ENCODE measurements at regions of chr22 and their contacts with region 1.

Region 1: DNA sequence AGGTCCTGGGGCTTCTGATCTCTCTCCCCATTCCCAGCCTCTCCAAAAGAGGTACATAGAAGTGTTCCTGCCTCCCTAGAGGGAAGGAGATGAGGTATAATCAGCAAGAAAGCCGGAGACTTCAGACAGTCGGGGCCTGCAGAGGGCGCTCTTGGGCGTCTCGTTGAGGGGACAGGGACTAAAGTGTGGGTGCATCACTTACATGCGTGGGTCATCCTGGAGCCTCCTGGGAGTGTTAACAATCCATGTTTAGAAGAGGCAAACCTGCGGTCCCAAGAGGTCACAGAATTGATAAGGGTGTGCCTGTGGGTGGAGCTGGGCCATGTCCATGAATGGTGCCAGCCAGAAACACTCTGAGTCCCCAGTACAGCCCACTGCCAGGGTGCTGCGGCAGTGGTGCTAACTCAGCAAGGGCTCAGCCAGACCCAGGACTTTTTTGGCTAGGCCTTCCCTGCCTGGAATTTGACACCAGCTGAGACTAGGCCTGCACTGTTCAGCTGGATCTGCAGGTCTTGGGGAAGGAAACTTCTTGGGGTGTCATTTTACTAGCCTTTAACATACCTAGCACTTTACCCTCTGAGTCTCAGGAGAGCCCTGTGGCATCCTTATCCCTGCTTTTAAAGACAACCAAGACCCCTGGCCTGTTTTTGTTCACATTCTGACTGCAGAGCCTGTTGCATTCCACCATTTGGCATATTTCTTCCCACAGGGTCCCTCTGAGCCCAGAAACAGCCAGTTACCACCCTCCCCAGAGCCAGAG is 5.5 kb downstream of the YDJC start:
- DNase-seq: peak in 4 of 5 donors; percentile 16 to 29 (median 23)
- H3K4me3 ChIP-seq: no peak overlapping the region
- H3K4me3 Mint-ChIP-seq: peak overlapping the region in 1 of 8 donors; percentile 20
- H3K27ac ChIP-seq: no peak overlapping the region
- H3K27ac Mint-ChIP-seq: peak overlapping the region; percentile 52 to 92 (median 73)
- H3K4me1 ChIP-seq: peaks cover 50% of the 10 kb centered on the region
- H3K4me1 Mint-ChIP-seq: peaks cover 22 to 64% (median 33%) of the 10 kb centered on the region in 4 donors
- H3K27me3 ChIP-seq: no peaks in the 10 kb centered on the region
- H3K27me3 Mint-ChIP-seq: no peaks in the 10 kb centered on the region

Region 2: GRCh38 chr22:21606775-21607174 is 17.5 kb before region 1 on chr22:
- CTCF ChIA-PET with region 1: interaction called, 10 read pairs
- POLR2A ChIA-PET with region 1: no interaction called
- intact Hi-C with region 1: no loop called
- DNase-seq: no peak
- H3K4me3 ChIP-seq: no peak overlapping the region
- H3K4me3 Mint-ChIP-seq: peak overlapping the region in 1 of 8 donors; percentile 7
- H3K27ac ChIP-seq: no peak overlapping the region
- H3K27ac Mint-ChIP-seq: peak overlapping the region in 3 of 7 donors; percentile 13 to 48 (median 16)
- H3K4me1 ChIP-seq: peaks cover 26% of the 10 kb centered on the region
- H3K4me1 Mint-ChIP-seq: peaks cover 20 to 63% (median 45%) of the 10 kb centered on the region in 4 donors
- H3K27me3 ChIP-seq: no peaks in the 10 kb centered on the region
- H3K27me3 Mint-ChIP-seq: no peaks in the 10 kb centered on the region

Region 3: GRCh38 chr22:21766691-21767462 is 142.6 kb after region 1 on chr22:
- CTCF ChIA-PET with region 1: no interaction called
- POLR2A ChIA-PET with region 1: no interaction called
- intact Hi-C with region 1: no loop called
- DNase-seq: peak; percentile 61 to 81 (median 65)
- H3K4me3 ChIP-seq: no peak overlapping the region
- H3K4me3 Mint-ChIP-seq: peak overlapping the region in 7 of 8 donors; percentile 59 to 86 (median 73)
- H3K27ac ChIP-seq: peak overlapping the region; percentile 41
- H3K27ac Mint-ChIP-seq: peak overlapping the region; percentile 91 to 95 (median 94)
- H3K4me1 ChIP-seq: peaks cover 69% of the 10 kb centered on the region
- H3K4me1 Mint-ChIP-seq: peaks cover 50 to 69% (median 62%) of the 10 kb centered on the region in 4 donors
- H3K27me3 ChIP-seq: no peaks in the 10 kb centered on the region
- H3K27me3 Mint-ChIP-seq: no peaks in the 10 kb centered on the region

Measured in CD4-positive, alpha-beta memory T cell (primary cell).